CD8-positive, alpha-beta T cell (primary cell): ENCODE measurements at regions of chr14 and their contacts with region 1.

Region 1: DNA sequence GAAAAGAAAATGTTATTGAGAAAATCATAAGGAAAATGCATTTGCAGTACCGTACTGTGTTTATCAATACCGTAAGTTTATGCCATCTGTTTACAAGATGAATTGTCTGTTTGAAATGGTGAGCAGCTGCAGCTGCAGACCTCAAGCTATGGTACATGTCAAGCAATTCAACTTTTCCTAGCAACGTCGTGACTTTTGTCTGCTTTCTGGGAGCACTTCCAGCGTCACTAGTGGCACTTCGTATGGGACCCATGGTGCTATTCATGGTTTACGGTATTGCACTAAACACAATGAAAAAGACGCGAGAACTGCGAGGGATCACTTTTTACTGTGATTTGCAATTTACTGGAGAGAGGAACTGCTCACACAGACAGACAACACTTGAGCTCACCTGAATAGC is 160.8 kb downstream of the UNC79 start:
- DNase-seq: no peak
- ATAC-seq: no peak
- H3K4me3 ChIP-seq: no peak overlapping the region
- H3K4me3 Mint-ChIP-seq: no peak overlapping the region
- H3K27ac ChIP-seq: no peak overlapping the region
- H3K27ac Mint-ChIP-seq: no peak overlapping the region
- H3K4me1 ChIP-seq: no peaks in the 10 kb centered on the region
- H3K4me1 Mint-ChIP-seq: no peaks in the 10 kb centered on the region
- H3K27me3 ChIP-seq: no peaks in the 10 kb centered on the region
- H3K27me3 Mint-ChIP-seq: peaks cover 26% of the 10 kb centered on the region
- CTCF ChIP-seq: no peak

Region 2: GRCh38 chr14:93619176-93619793 is 27.8 kb after region 1 on chr14:
- CTCF ChIA-PET with region 1: no interaction called
- POLR2A ChIA-PET with region 1: no interaction called
- intact Hi-C with region 1: no loop called
- DNase-seq: peak in 2 of 9 experiments; percentile 11 to 28
- ATAC-seq: no peak
- H3K4me3 ChIP-seq: no peak overlapping the region
- H3K4me3 Mint-ChIP-seq: no peak overlapping the region
- H3K27ac ChIP-seq: no peak overlapping the region
- H3K27ac Mint-ChIP-seq: no peak overlapping the region
- H3K4me1 ChIP-seq: no peaks in the 10 kb centered on the region
- H3K4me1 Mint-ChIP-seq: no peaks in the 10 kb centered on the region
- H3K27me3 ChIP-seq: no peaks in the 10 kb centered on the region
- H3K27me3 Mint-ChIP-seq: peaks cover 5% of the 10 kb centered on the region
- CTCF ChIP-seq: no peak

Region 3: DNA sequence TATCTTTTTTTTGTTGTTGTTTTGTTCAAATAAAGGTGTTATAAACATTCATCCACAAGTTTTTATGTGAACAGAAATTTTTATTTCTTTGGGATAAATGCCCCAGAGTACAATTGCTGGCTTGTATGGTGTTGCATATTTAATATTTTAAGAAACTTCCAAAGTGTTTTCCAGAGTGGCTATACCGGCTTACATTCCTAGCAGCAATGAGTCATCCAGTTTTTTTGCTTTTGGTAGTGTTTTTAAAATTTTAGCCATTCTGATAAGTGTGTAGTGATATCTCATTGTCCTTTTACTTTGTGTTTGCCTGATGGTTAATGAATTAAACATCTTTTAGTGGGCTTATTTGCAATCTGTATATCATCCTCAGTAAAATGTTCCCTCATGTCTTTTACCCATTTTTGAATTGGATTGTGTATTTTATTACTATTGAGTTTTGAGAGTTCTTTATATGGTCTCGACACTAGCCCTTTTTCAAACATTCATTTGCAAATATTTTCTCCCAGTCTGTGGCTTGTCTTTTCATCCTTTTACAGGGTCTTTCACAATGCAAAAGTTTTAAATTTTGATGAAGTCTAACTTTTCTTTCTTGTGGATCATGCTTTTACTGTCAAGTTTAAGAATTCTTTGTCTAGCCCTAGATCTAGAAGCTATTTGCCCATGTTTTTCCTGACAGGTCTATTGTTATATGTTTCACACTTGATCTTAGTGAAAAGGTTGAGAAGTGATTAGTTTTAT is 612.1 kb after region 1 on chr14:
- CTCF ChIA-PET with region 1: no interaction called
- POLR2A ChIA-PET with region 1: no interaction called
- intact Hi-C with region 1: loop called in 1 of 2 experiments (anchors 5 kb)
- DNase-seq: no peak
- ATAC-seq: no peak
- H3K4me3 ChIP-seq: no peak overlapping the region
- H3K4me3 Mint-ChIP-seq: no peak overlapping the region
- H3K27ac ChIP-seq: no peak overlapping the region
- H3K27ac Mint-ChIP-seq: no peak overlapping the region
- H3K4me1 ChIP-seq: no peaks in the 10 kb centered on the region
- H3K4me1 Mint-ChIP-seq: no peaks in the 10 kb centered on the region
- H3K27me3 ChIP-seq: peaks cover 0 to 2% of the 10 kb centered on the region in 2 experiments
- H3K27me3 Mint-ChIP-seq: peaks cover 51% of the 10 kb centered on the region
- CTCF ChIP-seq: no peak